H1 (cell line): ENCODE measurements at regions of chr16 and their contacts with region 1.

Region 1: DNA sequence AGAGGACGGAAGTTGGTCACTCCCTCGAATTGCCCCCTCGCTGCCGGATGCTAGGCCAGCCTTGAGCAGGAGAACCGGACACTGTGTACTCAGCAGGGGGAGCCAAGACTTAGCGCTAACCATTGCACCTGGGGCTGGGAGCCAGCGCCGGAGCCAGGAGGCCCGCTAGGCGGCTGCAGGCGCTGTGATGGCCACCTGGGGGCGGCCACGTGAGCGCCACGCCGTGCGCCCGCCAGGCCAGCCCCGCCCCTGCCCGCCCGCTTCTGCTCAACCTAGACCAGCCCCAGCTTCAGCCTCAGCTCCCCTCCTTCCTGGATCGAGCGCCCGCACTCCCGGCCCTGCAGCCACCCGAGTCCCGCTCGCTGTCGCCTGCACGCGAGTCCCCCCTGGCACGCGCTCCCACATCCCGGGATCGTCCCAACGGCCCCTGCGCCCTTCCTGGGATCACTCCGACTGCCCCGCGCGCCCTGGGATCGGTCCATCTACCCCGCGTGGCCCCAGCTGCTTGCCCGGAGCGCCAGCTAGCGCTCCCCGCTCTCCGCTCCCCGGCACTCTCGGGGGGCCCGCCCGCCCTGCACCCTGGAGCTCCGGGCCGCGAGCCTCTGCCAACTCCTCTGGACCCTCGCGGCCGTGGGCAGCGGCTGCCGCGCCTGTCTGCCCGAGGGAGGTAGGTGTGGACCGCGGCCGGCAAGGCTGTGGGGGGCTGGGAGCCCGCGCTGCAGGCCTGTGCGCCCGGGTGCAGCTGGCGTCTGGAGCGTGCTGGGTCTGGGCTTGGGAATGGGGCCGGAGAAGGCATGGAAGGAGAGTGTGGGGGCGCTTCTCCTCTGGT is at the start of gene EEF2K:
- DNase-seq: peak; percentile 83 to 89
- H3K4me3 ChIP-seq: peak within 1 kb of the TSS; percentile 65 to 85 (median 76)
- H3K27ac ChIP-seq: no peak within 1 kb of the TSS
- H3K4me1 ChIP-seq: peaks cover 0 to 7% (median 4%) of the 10 kb centered on the region in 4 experiments; a peak in 4 of 7 replicates
- H3K27me3 ChIP-seq: no peaks in the 10 kb centered on the region
- CTCF ChIP-seq: peak; percentile 69 to 86 (median 76)
- EP300 ChIP-seq: peak in 1 of 2 experiments; percentile 39; a peak in 1 of 3 replicates
- POLR2A ChIP-seq: peak in 1 of 2 experiments; percentile 53; a peak in 1 of 3 replicates
- RAD21 ChIP-seq: peak; percentile 33 to 63
- total RNA-seq, gene EEF2K: 30.2 and 30.5 TPM in 2 replicates

Region 2: GRCh38 chr16:22217889-22218730 is 11.9 kb after region 1 on chr16:
- CTCF ChIA-PET with region 1: interaction called, 66 read pairs
- POLR2A ChIA-PET with region 1: interaction called, 14 read pairs
- DNase-seq: no peak
- H3K4me3 ChIP-seq: no peak overlapping the region
- H3K27ac ChIP-seq: no peak overlapping the region
- H3K4me1 ChIP-seq: no peaks in the 10 kb centered on the region
- H3K27me3 ChIP-seq: no peaks in the 10 kb centered on the region
- CTCF ChIP-seq: no peak
- EP300 ChIP-seq: no peak
- POLR2A ChIP-seq: no peak
- RAD21 ChIP-seq: no peak

Region 3: DNA sequence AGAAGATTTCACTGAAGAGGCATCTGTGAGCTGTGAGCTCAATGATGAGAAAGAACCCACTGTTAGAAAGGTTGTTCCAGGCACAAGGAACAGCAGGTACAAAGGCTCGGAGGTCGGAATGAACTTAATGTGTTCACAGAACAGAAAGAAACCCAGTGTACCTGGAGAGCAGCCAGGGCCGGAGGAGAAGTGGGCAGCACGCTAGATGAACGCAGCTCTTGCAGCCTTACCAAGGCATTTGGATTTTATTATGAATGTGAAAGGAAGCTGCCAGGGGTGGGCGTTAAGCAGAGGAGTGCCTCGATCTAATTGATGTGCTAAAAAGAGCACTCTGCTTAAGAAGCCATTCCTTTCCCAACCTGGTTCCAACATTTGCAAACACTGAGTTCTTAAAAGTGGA is 18.8 kb after region 1 on chr16:
- CTCF ChIA-PET with region 1: interaction called, 66 read pairs
- POLR2A ChIA-PET with region 1: interaction called, 14 read pairs
- DNase-seq: peak in 1 of 2 experiments; percentile 36
- H3K4me3 ChIP-seq: peak overlapping the region in 1 of 4 experiments; percentile 30; a peak in 2 of 8 replicates
- H3K27ac ChIP-seq: peak overlapping the region; percentile 21; the same call in 1 of the 2 replicates
- H3K4me1 ChIP-seq: peaks cover 0 to 7% (median 4%) of the 10 kb centered on the region in 4 experiments; a peak in 6 of 7 replicates
- H3K27me3 ChIP-seq: no peaks in the 10 kb centered on the region
- CTCF ChIP-seq: no peak
- EP300 ChIP-seq: no peak
- POLR2A ChIP-seq: no peak
- RAD21 ChIP-seq: no peak

Region 4: DNA sequence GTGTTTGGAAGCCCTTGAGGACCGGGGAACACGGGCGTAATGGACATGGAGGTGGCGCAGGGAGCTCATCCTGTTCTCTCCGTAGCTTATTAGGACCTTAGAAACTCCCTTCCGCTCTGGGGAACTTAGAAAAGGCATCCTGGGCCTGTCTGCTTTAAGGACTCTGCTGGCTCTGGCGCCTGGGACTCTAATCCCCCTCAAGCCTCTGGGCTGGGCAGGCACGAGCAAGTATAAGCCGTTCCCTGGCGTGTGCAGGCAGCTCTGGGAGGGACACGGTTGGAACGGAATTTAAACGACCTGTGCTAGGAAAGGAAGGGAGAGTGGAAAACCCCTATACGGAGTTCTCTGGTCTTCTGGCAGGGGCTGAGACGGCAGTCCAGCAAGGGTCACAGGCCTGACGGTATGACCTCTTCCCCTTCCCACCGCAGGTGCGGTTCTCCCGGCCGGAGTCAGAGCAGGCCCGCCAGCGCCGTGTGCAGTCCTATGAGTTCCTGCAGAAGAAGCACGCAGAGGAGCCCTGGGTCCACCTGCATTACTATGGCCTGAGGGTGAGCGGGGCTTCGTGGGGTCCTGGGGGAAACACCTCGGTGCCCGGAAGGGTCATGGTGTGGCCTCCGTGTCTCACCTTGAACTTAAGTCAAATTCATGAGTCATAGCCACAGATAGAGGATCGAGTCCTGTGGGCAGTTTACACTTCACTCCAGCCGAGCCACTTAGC is 108.6 kb after region 1 on chr16:
- CTCF ChIA-PET with region 1: interaction called, 10 read pairs
- POLR2A ChIA-PET with region 1: no interaction called
- DNase-seq: no peak
- H3K4me3 ChIP-seq: no peak overlapping the region
- H3K27ac ChIP-seq: no peak overlapping the region
- H3K4me1 ChIP-seq: no peaks in the 10 kb centered on the region
- H3K27me3 ChIP-seq: no peaks in the 10 kb centered on the region
- CTCF ChIP-seq: no peak
- EP300 ChIP-seq: no peak
- POLR2A ChIP-seq: no peak
- RAD21 ChIP-seq: no peak